Heart right ventricle (tissue), 16 donors: ENCODE measurements at regions of chr6 and their contacts with region 1.

Region 1: GRCh38 chr6:12233693-12234571 is 56.2 kb upstream of the EDN1 start:
- DNase-seq: peak in 1 of 2 donors; percentile 56
- ATAC-seq: peak in 6 of 8 donors; percentile 56 to 77 (median 61)
- H3K4me3 ChIP-seq: no peak overlapping the region
- H3K27ac ChIP-seq: peak overlapping the region in 1 of 10 donors; percentile 27
- H3K4me1 ChIP-seq: peaks cover 0 to 36% (median 0%) of the 10 kb centered on the region in 9 donors
- H3K27me3 ChIP-seq: no peaks in the 10 kb centered on the region
- CTCF ChIP-seq: peak; percentile 35 to 85 (median 70)

Region 2: DNA sequence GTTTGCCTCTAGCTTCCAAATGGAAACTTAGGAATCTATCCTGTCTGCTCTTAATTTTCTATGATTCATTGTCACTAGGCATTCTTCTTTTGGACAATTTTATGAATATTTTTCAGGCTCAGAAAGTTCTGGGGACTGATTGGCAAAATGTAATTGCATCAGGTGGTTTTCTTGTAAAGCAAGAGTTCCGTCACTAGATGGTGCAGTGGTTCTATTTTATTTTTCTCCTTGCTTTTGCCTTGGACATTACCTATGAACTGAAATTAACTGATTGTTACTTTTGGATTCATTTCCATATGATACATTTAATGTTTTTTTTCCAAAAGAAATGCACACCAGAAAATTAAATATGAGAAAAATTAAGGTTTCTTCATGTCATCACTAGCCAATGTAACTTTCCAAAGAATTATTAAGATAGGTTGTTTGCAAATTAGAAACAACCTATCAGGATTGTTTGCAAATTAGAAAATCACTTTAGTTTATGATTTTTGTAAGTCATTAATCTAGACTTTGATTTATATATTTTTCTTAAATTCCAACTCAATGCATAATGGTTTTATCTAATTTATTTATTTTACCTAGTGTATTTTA is 648.4 kb before region 1 on chr6:
- intact Hi-C with region 1: loop called in 8 of 10 experiments (anchors 2 to 10 kb)
- DNase-seq: no peak
- ATAC-seq: peak in 1 of 8 donors; percentile 34
- H3K4me3 ChIP-seq: no peak overlapping the region
- H3K27ac ChIP-seq: no peak overlapping the region
- H3K4me1 ChIP-seq: peaks cover 0 to 13% (median 0%) of the 10 kb centered on the region in 9 donors
- H3K27me3 ChIP-seq: no peaks in the 10 kb centered on the region
- CTCF ChIP-seq: peak; percentile 20 to 83 (median 67)

Region 3: GRCh38 chr6:11700118-11700718 is 533.7 kb before region 1 on chr6:
- intact Hi-C with region 1: loop called in 1 of 10 experiments (anchors 5 kb)
- DNase-seq: no peak
- ATAC-seq: no peak
- H3K4me3 ChIP-seq: no peak overlapping the region
- H3K27ac ChIP-seq: no peak overlapping the region
- H3K4me1 ChIP-seq: peaks cover 0 to 9% (median 0%) of the 10 kb centered on the region in 9 donors
- H3K27me3 ChIP-seq: no peaks in the 10 kb centered on the region
- CTCF ChIP-seq: peak; percentile 33 to 69 (median 51)

Region 4: DNA sequence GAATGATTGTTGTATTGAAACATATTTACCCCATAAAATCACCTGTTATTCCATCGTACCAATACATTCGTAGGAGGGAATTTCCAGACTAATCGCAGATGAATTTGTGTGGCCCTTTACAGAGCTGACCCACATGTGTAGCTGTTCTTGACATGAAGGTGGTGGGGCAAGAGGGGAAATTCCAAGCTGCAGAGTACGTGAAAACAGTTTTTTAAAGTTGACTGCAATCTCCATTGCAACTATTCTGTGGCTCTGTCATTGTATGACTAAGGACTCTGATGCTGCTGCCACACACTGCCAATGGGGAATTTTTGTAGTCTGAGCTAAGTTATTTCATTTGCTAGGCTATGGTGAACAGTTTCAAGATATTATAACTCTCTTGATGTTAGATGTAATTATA is 408.9 kb before region 1 on chr6:
- intact Hi-C with region 1: loop called in 4 of 10 experiments (anchors 10 kb)
- DNase-seq: no peak
- ATAC-seq: no peak
- H3K4me3 ChIP-seq: no peak overlapping the region
- H3K27ac ChIP-seq: no peak overlapping the region
- H3K4me1 ChIP-seq: peaks cover 0 to 4% (median 0%) of the 10 kb centered on the region in 9 donors
- H3K27me3 ChIP-seq: peaks cover 0 to 4% (median 0%) of the 10 kb centered on the region in 7 donors
- CTCF ChIP-seq: no peak